Heart right ventricle (tissue), 16 donors: ENCODE measurements at regions of chr14 and their contacts with region 1.

Region 1: GRCh38 chr14:54488646-54489317 is at the start of gene GMFB:
- DNase-seq: peak; percentile 94 to 95
- ATAC-seq: peak; percentile 97 to 98 (median 98)
- H3K4me3 ChIP-seq: peak within 1 kb of the TSS; percentile 61 to 96 (median 84)
- H3K27ac ChIP-seq: peak within 1 kb of the TSS; percentile 87 to 99 (median 98)
- H3K4me1 ChIP-seq: peaks cover 6 to 55% (median 34%) of the 10 kb centered on the region in 9 donors
- H3K27me3 ChIP-seq: no peaks in the 10 kb centered on the region
- CTCF ChIP-seq: peak in 8 of 9 donors; percentile 31 to 70 (median 47)
- total RNA-seq, gene GMFB: 16.8 to 30.5 (median 20.2) TPM

Region 2: GRCh38 chr14:54440873-54441868 is 47.6 kb before region 1 on chr14 and contains the start of gene CNIH1:
- intact Hi-C with region 1: loop called in 4 of 10 experiments (anchors 5 kb)
- DNase-seq: peak; percentile 92 to 93
- ATAC-seq: peak; percentile 98 to 99 (median 99)
- H3K4me3 ChIP-seq: peak within 1 kb of the TSS; percentile 45 to 82 (median 63)
- H3K27ac ChIP-seq: peak within 1 kb of the TSS; percentile 78 to 97 (median 90)
- H3K4me1 ChIP-seq: peaks cover 0 to 54% (median 25%) of the 10 kb centered on the region in 9 donors
- H3K27me3 ChIP-seq: no peaks in the 10 kb centered on the region
- CTCF ChIP-seq: peak; percentile 90 to 99 (median 95)
- total RNA-seq, gene CNIH1: 80.7 to 108 (median 91.4) TPM

Region 3: GRCh38 chr14:54509546-54510501 is 21.0 kb after region 1 on chr14 and contains the start of gene CGRRF1:
- intact Hi-C with region 1: loop called in 2 of 10 experiments (anchors 1 to 2 kb)
- DNase-seq: peak; percentile 99
- ATAC-seq: peak; percentile 99 to 100 (median 99)
- H3K4me3 ChIP-seq: peak within 1 kb of the TSS; percentile 80 to 97 (median 91)
- H3K27ac ChIP-seq: peak within 1 kb of the TSS in 9 of 10 donors; percentile 72 to 92 (median 86)
- H3K4me1 ChIP-seq: peaks cover 0 to 34% (median 31%) of the 10 kb centered on the region in 9 donors
- H3K27me3 ChIP-seq: no peaks in the 10 kb centered on the region
- CTCF ChIP-seq: peak; percentile 47 to 98 (median 83)
- total RNA-seq, gene CGRRF1: 14.2 to 20.3 (median 16.7) TPM